Esophagus muscularis mucosa (tissue), 4 donors: ENCODE measurements at regions of chr1 and their contacts with region 1.

Region 1: DNA sequence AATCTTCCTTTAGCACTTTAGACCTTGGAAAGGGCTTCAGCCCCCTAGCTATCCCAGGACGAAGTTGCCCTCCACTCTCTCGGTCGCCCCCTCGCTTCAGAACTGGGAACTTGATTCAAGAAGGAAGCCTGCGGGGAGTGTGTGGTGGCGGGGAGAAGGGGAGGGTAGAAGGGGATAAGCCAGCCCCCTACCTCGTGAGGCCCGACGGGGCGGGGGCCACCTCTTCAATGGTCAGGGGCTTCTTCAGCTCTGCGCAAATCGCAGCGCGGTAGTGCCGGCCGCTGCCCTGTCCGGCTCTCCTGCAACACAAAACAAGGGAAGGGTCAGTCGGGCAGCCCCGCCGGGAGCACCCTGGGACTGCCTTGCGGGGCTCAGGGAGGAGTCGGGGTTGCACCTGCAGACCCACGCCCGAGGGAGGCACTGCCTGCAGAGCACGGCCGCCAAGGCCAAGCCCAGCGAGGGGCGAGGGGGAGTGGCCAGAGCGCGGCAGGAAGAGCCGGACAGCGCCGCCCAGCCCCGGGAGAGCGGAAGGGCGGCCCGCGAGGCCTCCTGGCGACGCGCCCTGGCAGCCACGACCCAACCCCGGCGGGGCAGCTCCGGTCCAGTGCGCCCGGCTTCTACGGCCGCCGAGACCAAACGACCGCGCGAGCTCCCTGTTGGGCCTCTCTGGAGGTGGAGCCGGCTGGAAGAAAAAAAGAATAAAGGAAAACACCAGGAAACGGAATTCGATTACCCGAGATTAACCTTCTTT is 56.2 kb upstream of the RASAL2 start:
- DNase-seq: no peak
- H3K4me3 ChIP-seq: peak overlapping the region; percentile 68 to 78 (median 72)
- H3K27ac ChIP-seq: peak overlapping the region; percentile 52 to 81 (median 72)
- H3K4me1 ChIP-seq: peaks cover 14 to 25% (median 18%) of the 10 kb centered on the region in 4 donors
- H3K27me3 ChIP-seq: no peaks in the 10 kb centered on the region
- CTCF ChIP-seq: peak; percentile 38 to 49 (median 40)
- EP300 ChIP-seq: no peak
- POLR2A ChIP-seq: no peak

Region 2: GRCh38 chr1:178282949-178283367 is 245.3 kb after region 1 on chr1:
- intact Hi-C with region 1: loop called (anchors 5 kb)
- DNase-seq: no peak
- H3K4me3 ChIP-seq: no peak overlapping the region
- H3K27ac ChIP-seq: no peak overlapping the region
- H3K4me1 ChIP-seq: peaks cover 6 to 21% (median 7%) of the 10 kb centered on the region in 4 donors
- H3K27me3 ChIP-seq: no peaks in the 10 kb centered on the region
- CTCF ChIP-seq: peak; percentile 29 to 46 (median 34)
- EP300 ChIP-seq: no peak
- POLR2A ChIP-seq: no peak

Region 3: DNA sequence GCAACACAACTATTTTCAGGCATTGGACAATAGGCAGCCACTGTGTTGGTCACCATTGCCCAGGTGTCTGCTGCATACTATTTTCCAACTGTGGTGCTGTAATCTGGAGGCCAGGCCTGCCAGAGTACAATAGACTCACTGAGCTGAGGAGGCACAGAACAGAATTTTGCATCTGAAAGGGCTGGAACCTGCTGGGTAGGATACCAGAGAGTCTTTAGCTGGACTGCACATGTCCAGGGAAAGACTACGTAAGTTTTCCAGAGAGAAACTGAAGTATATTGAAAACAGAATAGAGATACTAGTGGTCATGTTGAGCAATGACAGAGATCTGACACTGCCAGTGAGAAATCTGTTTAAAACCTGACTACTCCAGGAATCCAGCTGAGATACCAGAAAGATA is 257.0 kb after region 1 on chr1:
- intact Hi-C with region 1: loop called (anchors 5 kb)
- DNase-seq: no peak
- H3K4me3 ChIP-seq: no peak overlapping the region
- H3K27ac ChIP-seq: no peak overlapping the region
- H3K4me1 ChIP-seq: peaks cover 0 to 3% (median 1%) of the 10 kb centered on the region in 4 donors
- H3K27me3 ChIP-seq: no peaks in the 10 kb centered on the region
- CTCF ChIP-seq: no peak
- EP300 ChIP-seq: no peak
- POLR2A ChIP-seq: no peak